ENCODE measurements at regions of chr20 and their contacts with region 1.

Region 1: DNA sequence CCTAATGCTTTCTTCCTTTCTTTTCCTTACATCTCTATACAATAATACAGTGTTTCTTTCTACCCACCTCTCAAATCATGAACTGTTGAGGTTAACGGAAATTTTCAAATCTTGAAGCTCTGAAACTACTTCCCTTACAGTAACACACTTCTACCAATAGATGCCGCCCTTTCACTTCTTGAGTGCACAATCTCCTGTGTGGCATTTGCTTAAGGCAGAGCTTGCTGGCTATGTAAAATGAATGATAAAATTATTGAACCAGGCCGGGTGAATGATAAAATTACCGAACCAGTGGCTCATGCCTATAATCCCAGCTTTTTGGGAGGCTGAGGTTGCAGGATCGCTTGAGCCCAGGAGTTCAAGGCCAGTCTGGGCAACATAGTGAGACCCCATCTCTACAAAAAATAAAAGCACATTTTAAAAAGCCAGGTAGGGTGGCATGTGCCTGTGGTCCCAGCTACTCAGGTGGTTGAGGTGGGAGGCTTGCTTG is 56.8 kb downstream of the KCNS1 start:
- DNase-seq: peak in 30 of 35 experiments; percentile 9 to 80 (median 29)
- ATAC-seq: peak; percentile 72 to 84 (median 80)
- H3K4me3 ChIP-seq: no peak overlapping the region
- H3K4me3 Mint-ChIP-seq: no peak overlapping the region
- H3K27ac ChIP-seq: peak overlapping the region; percentile 3
- H3K27ac Mint-ChIP-seq: peak overlapping the region; percentile 46 to 80
- H3K4me1 ChIP-seq: peaks cover 8 to 15% of the 10 kb centered on the region in 2 experiments
- H3K4me1 Mint-ChIP-seq: peaks cover 72 to 81% (median 81%) of the 10 kb centered on the region in 3 donors
- H3K27me3 ChIP-seq: no peaks in the 10 kb centered on the region
- H3K27me3 Mint-ChIP-seq: no peaks in the 10 kb centered on the region

Region 2: DNA sequence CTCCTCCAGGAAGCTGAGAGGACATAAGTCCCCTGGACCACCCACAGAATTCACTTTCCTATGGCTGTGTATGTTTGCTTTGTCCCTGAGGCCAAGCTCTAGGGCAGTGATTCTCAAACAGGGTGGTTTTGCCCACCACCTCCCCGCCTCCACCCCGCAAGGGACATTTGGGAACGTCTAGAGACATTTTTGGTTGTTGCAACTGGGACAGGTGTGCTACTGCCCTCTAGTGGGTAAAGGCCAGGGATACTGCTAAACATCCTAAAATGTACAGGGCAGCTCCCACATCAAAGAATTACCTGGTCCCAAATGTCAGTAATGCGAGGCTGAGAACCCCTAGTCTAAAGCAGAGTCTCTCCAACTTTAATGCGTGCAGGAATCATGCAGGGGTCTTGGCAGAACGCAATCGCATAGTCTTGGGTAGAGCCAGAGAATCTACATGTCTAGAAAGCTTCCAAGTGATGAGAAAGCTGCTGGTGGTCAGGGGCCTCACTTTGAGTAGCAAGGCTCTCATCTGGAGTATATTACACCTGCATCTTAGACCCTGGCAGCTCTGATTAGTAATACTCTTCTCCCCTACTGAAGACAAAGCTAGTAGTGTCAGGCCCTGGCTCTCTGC is 51.7 kb after region 1 on chr20:
- CTCF ChIA-PET with region 1: interaction called, 4 to 26 read pairs
- POLR2A ChIA-PET with region 1: no interaction called
- DNase-seq: peak in 33 of 35 experiments; percentile 8 to 81 (median 45)
- ATAC-seq: peak; percentile 52 to 65 (median 56)
- H3K4me3 ChIP-seq: no peak overlapping the region
- H3K4me3 Mint-ChIP-seq: no peak overlapping the region
- H3K27ac ChIP-seq: no peak overlapping the region
- H3K27ac Mint-ChIP-seq: no peak overlapping the region
- H3K4me1 ChIP-seq: peaks cover 0 to 18% of the 10 kb centered on the region in 2 experiments
- H3K4me1 Mint-ChIP-seq: peaks cover 4 to 22% (median 18%) of the 10 kb centered on the region in 3 donors
- H3K27me3 ChIP-seq: peaks cover 14 to 33% of the 10 kb centered on the region in 2 experiments
- H3K27me3 Mint-ChIP-seq: peaks cover 29 to 39% of the 10 kb centered on the region in 2 donors

Region 3: DNA sequence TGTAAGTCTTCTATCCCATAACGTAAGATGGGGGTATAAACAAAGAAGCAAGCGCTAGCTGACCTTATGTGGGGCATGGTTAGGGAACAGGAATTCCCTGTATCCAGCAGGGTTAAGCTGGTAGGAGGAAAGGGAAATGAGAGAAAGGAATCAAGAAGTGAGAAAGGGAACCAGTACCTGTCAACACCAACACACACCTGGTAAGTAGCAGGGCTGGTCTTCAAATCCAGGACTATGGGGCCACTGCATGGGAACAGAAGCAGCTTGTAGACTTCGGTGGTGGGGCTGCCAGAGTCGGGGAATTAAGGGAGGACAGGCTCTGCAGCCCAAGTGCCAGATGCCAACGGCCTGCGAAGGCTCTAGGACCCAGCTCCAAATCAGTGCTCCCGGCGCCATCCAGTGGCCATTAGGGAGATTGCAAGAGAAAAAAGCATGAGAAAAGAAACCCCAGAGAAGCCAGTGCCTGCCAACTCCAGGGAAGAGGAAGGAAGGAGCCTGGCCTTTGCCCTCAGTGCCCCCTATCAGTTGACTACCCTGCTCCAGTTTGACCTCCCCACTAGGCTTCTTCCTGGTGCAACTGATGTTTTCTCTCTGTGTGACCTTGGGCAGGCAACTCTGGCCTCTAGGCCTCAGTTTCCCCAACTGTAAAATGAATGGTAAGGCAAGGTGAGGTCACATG is 246.7 kb after region 1 on chr20:
- CTCF ChIA-PET with region 1: interaction called, 5 to 12 read pairs
- POLR2A ChIA-PET with region 1: no interaction called
- DNase-seq: peak; percentile 19 to 75 (median 48)
- ATAC-seq: peak; percentile 29 to 41 (median 38)
- H3K4me3 ChIP-seq: no peak overlapping the region
- H3K4me3 Mint-ChIP-seq: no peak overlapping the region
- H3K27ac ChIP-seq: no peak overlapping the region
- H3K27ac Mint-ChIP-seq: no peak overlapping the region
- H3K4me1 ChIP-seq: peaks cover 0 to 20% of the 10 kb centered on the region in 2 experiments
- H3K4me1 Mint-ChIP-seq: peaks cover 14 to 21% (median 17%) of the 10 kb centered on the region in 3 donors
- H3K27me3 ChIP-seq: peaks cover 11 to 49% of the 10 kb centered on the region in 2 experiments
- H3K27me3 Mint-ChIP-seq: peaks cover 43 to 60% of the 10 kb centered on the region in 2 donors